ENCODE measurements at regions of chr15 and their contacts with region 1.

Region 1: DNA sequence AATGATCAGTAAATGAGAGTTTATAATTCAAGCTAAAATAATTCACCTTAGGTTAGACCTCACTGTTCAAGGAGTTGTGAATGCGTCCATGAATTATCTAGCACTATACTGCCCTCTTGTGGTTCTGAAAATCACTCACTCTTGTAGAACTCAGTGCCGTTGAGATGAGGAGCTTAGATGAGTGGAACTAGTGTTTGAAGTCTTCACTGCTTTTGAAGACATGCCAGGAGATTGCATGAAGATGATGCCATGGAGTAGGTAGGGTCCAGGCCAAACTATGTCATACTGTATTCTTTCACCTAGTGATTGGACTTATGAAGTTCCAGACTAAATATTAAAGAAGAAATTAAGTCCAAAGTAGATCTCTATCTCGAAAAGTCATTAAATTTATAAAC is 28.8 kb downstream of the LYSMD4 start:
- DNase-seq: peak; percentile 55 to 83 (median 58)
- ATAC-seq: peak; percentile 94
- H3K4me3 ChIP-seq: no peak overlapping the region
- H3K27ac ChIP-seq: peak overlapping the region; percentile 40; the same call in 1 of the 3 replicates
- H3K4me1 ChIP-seq: peaks cover 0 to 6% of the 10 kb centered on the region in 2 experiments; a peak in 3 of 5 replicates
- H3K27me3 ChIP-seq: no peaks in the 10 kb centered on the region
- CTCF ChIP-seq: peak; percentile 60 to 78 (median 73)
- EP300 ChIP-seq: no peak
- POLR2A ChIP-seq: no peak
- RAD21 ChIP-seq: peak; percentile 80 to 87

Region 2: GRCh38 chr15:99275525-99276128 is 428.8 kb before region 1 on chr15:
- CTCF ChIA-PET with region 1: interaction called, 11 read pairs
- POLR2A ChIA-PET with region 1: interaction called, 4 read pairs
- in situ Hi-C with region 1: no loop called
- intact Hi-C with region 1: loop called (anchors 1 kb)
- DNase-seq: no peak
- ATAC-seq: no peak
- H3K4me3 ChIP-seq: no peak overlapping the region
- H3K27ac ChIP-seq: no peak overlapping the region
- H3K4me1 ChIP-seq: no peaks in the 10 kb centered on the region
- H3K27me3 ChIP-seq: no peaks in the 10 kb centered on the region
- CTCF ChIP-seq: no peak
- EP300 ChIP-seq: no peak
- POLR2A ChIP-seq: no peak
- RAD21 ChIP-seq: no peak

Region 3: GRCh38 chr15:99282121-99282520 is 422.3 kb before region 1 on chr15:
- CTCF ChIA-PET with region 1: interaction called, 27 read pairs
- POLR2A ChIA-PET with region 1: interaction called, 3 read pairs
- in situ Hi-C with region 1: no loop called
- intact Hi-C with region 1: loop called (anchors 1 kb)
- DNase-seq: no peak
- ATAC-seq: no peak
- H3K4me3 ChIP-seq: no peak overlapping the region
- H3K27ac ChIP-seq: no peak overlapping the region
- H3K4me1 ChIP-seq: no peaks in the 10 kb centered on the region
- H3K27me3 ChIP-seq: no peaks in the 10 kb centered on the region
- CTCF ChIP-seq: no peak
- EP300 ChIP-seq: no peak
- POLR2A ChIP-seq: no peak
- RAD21 ChIP-seq: no peak

Region 4: DNA sequence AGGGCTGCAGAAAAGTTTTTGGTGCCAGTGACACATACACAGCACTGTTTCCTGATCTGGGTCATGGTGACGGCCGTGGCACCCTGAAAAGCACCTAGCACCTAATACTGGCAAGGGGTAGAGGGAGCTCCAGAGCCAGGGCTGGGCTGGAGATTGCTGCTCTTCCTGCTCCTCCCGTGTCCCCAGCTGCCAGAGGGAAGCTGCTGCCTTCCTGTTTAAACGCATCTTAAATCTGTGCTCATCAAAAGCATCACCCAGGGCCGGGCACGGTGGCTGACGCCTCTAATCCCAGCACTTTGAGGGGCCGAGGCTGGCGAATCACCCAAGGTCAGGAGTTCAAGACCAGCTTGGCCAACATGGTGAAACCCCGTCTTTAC is 295.4 kb before region 1 on chr15:
- CTCF ChIA-PET with region 1: no interaction called
- POLR2A ChIA-PET with region 1: no interaction called
- in situ Hi-C with region 1: no loop called
- intact Hi-C with region 1: loop called (anchors 10 kb)
- DNase-seq: no peak
- ATAC-seq: no peak
- H3K4me3 ChIP-seq: no peak overlapping the region
- H3K27ac ChIP-seq: no peak overlapping the region
- H3K4me1 ChIP-seq: no peaks in the 10 kb centered on the region; a peak in 2 of 5 replicates
- H3K27me3 ChIP-seq: peaks cover 10 to 70% of the 10 kb centered on the region in 2 experiments; a peak in 4 of 5 replicates
- CTCF ChIP-seq: peak in 1 of 3 experiments; percentile 23; a peak in 2 of 6 replicates
- EP300 ChIP-seq: no peak
- POLR2A ChIP-seq: no peak
- RAD21 ChIP-seq: peak; percentile 17 to 52; a peak in 3 of 4 replicates

Region 5: GRCh38 chr15:99507504-99508310 is 196.7 kb before region 1 on chr15:
- CTCF ChIA-PET with region 1: no interaction called
- POLR2A ChIA-PET with region 1: no interaction called
- in situ Hi-C with region 1: no loop called
- intact Hi-C with region 1: loop called (anchors 10 kb)
- DNase-seq: peak in 2 of 4 experiments; percentile 29 to 42
- ATAC-seq: peak; percentile 75
- H3K4me3 ChIP-seq: no peak overlapping the region
- H3K27ac ChIP-seq: no peak overlapping the region
- H3K4me1 ChIP-seq: peaks cover 4 to 7% of the 10 kb centered on the region in 2 experiments; a peak in 3 of 5 replicates
- H3K27me3 ChIP-seq: peaks cover 23 to 50% of the 10 kb centered on the region in 2 experiments
- CTCF ChIP-seq: no peak
- EP300 ChIP-seq: no peak
- POLR2A ChIP-seq: no peak
- RAD21 ChIP-seq: no peak

Region 6: GRCh38 chr15:99565299-99566156 is 138.9 kb before region 1 on chr15 and contains the start of gene MEF2A:
- CTCF ChIA-PET with region 1: no interaction called
- POLR2A ChIA-PET with region 1: interaction called, 4 read pairs
- in situ Hi-C with region 1: no loop called
- intact Hi-C with region 1: loop called (anchors 5 kb)
- DNase-seq: peak; percentile 91 to 94 (median 92)
- ATAC-seq: peak; percentile 87
- H3K4me3 ChIP-seq: peak within 1 kb of the TSS; percentile 84
- H3K27ac ChIP-seq: peak within 1 kb of the TSS; percentile 91
- H3K4me1 ChIP-seq: peaks cover 16 to 23% of the 10 kb centered on the region in 2 experiments; a peak in 4 of 5 replicates
- H3K27me3 ChIP-seq: peaks cover 4 to 8% of the 10 kb centered on the region in 2 experiments; a peak in 4 of 5 replicates
- CTCF ChIP-seq: no peak
- EP300 ChIP-seq: peak; percentile 32
- POLR2A ChIP-seq: peak; percentile 66
- RAD21 ChIP-seq: peak in 1 of 2 experiments; percentile 4; a peak in 1 of 4 replicates
- polyA plus RNA-seq, gene MEF2A: 1.6 to 2.1 TPM

Region 7: GRCh38 chr15:99726333-99726732 is 21.9 kb after region 1 on chr15:
- CTCF ChIA-PET with region 1: no interaction called
- POLR2A ChIA-PET with region 1: no interaction called
- in situ Hi-C with region 1: no loop called
- intact Hi-C with region 1: no loop called
- DNase-seq: no peak
- ATAC-seq: peak; percentile 55; the same call in 2 of the 3 replicates
- H3K4me3 ChIP-seq: no peak overlapping the region
- H3K27ac ChIP-seq: no peak overlapping the region
- H3K4me1 ChIP-seq: no peaks in the 10 kb centered on the region
- H3K27me3 ChIP-seq: peaks cover 0 to 21% of the 10 kb centered on the region in 2 experiments; a peak in 1 of 5 replicates
- CTCF ChIP-seq: no peak
- EP300 ChIP-seq: no peak
- POLR2A ChIP-seq: no peak
- RAD21 ChIP-seq: no peak

Region 8: GRCh38 chr15:99755692-99756409 is 51.4 kb after region 1 on chr15:
- CTCF ChIA-PET with region 1: interaction called, 6 read pairs
- POLR2A ChIA-PET with region 1: no interaction called
- in situ Hi-C with region 1: no loop called
- intact Hi-C with region 1: loop called (anchors 1 kb)
- DNase-seq: peak; percentile 49 to 70 (median 60)
- ATAC-seq: peak; percentile 94
- H3K4me3 ChIP-seq: no peak overlapping the region
- H3K27ac ChIP-seq: no peak overlapping the region
- H3K4me1 ChIP-seq: peaks cover 0 to 3% of the 10 kb centered on the region in 2 experiments; a peak in 3 of 5 replicates
- H3K27me3 ChIP-seq: peaks cover 4 to 12% of the 10 kb centered on the region in 2 experiments
- CTCF ChIP-seq: peak; percentile 63 to 82 (median 72)
- EP300 ChIP-seq: no peak
- POLR2A ChIP-seq: no peak
- RAD21 ChIP-seq: peak; percentile 63 to 85

Region 9: DNA sequence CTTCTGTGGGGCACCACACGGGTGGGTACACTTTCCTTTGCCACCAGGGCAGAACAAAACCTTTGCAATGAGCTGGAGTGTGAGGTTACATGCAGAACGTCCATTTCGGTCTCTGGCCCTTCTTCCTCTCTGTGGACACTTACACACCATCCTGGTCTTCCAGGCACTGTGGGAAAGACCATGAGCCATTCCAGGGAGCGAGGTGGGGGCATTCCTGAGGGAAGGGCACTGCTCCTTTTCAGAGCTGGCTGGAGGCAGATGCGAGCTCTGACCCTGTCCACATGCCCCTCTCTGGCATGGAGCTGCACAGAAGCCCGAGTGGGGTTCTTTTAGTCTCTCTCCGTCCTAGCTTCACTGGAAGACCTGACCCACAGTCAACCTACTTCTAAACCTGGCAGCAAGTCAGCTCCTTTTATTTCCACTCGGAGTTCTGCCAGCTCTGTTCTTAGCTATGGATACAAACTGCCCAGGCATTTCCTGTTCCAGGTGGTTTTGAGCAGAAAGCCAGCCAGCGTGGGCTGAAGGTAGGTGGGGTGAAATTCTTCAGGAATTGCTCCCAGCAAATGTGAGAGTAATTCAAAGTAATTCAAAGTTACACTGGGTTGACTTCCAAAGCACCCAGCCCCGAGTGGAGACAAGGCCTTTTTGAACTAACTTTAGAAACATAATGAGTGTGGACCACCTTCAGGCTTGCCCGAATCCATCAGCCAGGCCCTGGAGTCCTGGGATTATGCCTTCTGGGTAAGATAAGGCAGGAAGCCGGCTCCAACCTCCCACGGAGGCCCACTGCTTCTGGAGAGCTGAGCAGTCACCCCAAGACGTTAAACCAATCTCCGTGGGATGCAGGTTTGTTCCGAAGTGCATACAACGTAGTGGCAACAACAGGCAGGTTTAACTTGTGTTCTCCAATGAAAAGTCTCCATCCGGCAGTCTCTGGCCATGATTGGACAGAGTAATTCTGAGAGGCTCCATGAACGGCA is 356.1 kb after region 1 on chr15:
- CTCF ChIA-PET with region 1: no interaction called
- POLR2A ChIA-PET with region 1: no interaction called
- in situ Hi-C with region 1: no loop called
- intact Hi-C with region 1: no loop called
- DNase-seq: no peak
- ATAC-seq: no peak
- H3K4me3 ChIP-seq: no peak overlapping the region
- H3K27ac ChIP-seq: no peak overlapping the region
- H3K4me1 ChIP-seq: no peaks in the 10 kb centered on the region
- H3K27me3 ChIP-seq: peaks cover 18 to 69% of the 10 kb centered on the region in 2 experiments
- CTCF ChIP-seq: no peak
- EP300 ChIP-seq: no peak
- POLR2A ChIP-seq: no peak
- RAD21 ChIP-seq: no peak

Measured in K562 (cell line).